ENCODE measurements at regions of chr11 and their contacts with region 1.

Region 1: GRCh38 chr11:3378426-3379423 is at the start of gene ZNF195:
- H3K4me3 ChIP-seq: peak within 1 kb of the TSS; percentile 93
- H3K27ac ChIP-seq: peak within 1 kb of the TSS; percentile 56; the same call in 1 of the 2 replicates
- H3K4me1 ChIP-seq: no peaks in the 10 kb centered on the region
- CTCF ChIP-seq: no peak

Region 2: GRCh38 chr11:2975594-2975993 is 403.1 kb before region 1 on chr11:
- CTCF ChIA-PET with region 1: no interaction called
- POLR2A ChIA-PET with region 1: no interaction called
- H3K4me3 ChIP-seq: no peak overlapping the region
- H3K27ac ChIP-seq: no peak overlapping the region
- H3K4me1 ChIP-seq: no peaks in the 10 kb centered on the region
- CTCF ChIP-seq: 0 out of 2 replicates have a peak, but pooled peaks have one; percentile 11

Region 3: GRCh38 chr11:3073029-3073435 is 305.7 kb before region 1 on chr11:
- CTCF ChIA-PET with region 1: no interaction called
- POLR2A ChIA-PET with region 1: no interaction called
- H3K4me3 ChIP-seq: no peak overlapping the region
- H3K27ac ChIP-seq: no peak overlapping the region
- H3K4me1 ChIP-seq: no peaks in the 10 kb centered on the region
- CTCF ChIP-seq: no peak

Region 4: DNA sequence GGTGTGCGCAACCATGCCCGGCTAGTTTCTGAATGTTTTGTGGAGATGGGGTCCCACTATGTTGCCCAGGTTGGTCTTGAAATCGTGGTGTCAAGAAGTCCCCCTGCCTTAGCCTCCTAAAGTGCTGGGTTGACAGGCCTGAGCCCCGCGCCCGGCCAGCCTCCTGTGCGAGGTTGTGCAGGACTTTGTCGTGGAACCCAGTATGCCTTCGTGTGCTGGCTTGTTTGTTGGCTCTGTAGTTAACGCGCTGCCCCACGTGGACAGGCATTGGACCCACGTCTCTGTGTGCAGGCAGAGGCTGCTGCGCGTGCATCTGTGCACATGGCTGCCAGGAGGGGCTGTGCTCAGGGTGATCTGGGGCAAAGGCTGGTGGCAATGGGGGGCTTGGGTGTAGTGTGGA is 34.1 kb after region 1 on chr11:
- CTCF ChIA-PET with region 1: interaction called, 15 read pairs
- POLR2A ChIA-PET with region 1: interaction called, 6 read pairs
- H3K4me3 ChIP-seq: no peak overlapping the region
- H3K27ac ChIP-seq: no peak overlapping the region
- H3K4me1 ChIP-seq: no peaks in the 10 kb centered on the region
- CTCF ChIP-seq: no peak